Activated CD4-positive, alpha-beta memory T cell treated with anti-CD3 and anti-CD28 coated beads for 36 hours (primary cell): ENCODE measurements at regions of chr5 and their contacts with region 1.

Region 1: DNA sequence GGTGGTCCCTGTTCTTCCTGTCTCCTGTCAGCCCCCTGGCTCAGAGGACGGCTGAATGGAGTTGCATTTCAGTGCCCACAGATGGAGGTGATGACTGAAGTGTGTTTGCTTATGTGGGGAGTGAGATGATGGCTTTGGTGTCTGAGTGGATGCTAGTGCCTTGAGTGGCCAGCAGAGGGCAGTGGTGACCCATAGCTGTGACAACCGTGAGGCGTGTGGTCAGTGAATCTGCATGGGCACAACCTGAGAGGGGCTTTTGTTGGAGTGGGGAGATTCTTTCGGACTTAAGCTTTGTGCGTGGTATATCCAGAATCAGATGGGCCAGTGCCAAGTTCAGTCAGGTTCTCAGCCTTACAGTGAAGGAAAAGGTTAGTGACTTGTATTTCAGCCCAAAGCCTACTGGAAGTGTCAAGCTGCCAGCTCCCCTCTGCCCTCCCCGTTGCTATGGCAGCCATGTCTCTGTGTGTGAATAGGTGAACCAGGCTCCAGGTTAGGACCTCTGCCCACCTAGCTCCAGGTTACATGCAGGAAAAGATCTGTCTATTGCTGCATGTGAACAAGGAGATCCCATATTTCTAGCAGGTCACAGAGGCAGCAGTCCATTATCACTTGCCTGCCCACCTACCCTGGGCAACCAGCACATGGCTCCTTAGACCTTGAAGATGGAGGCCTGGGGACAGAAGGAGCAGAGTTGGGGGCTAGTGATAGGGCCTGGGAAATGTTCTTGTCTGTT is 14.7 kb upstream of the CXXC5 start:
- DNase-seq: peak; percentile 76
- H3K4me3 Mint-ChIP-seq: no peak overlapping the region
- H3K27ac Mint-ChIP-seq: peak overlapping the region; percentile 23
- H3K4me1 Mint-ChIP-seq: peaks cover 40% of the 10 kb centered on the region
- H3K27me3 Mint-ChIP-seq: no peaks in the 10 kb centered on the region

Region 2: GRCh38 chr5:139354186-139354585 is 279.3 kb before region 1 on chr5:
- CTCF ChIA-PET with region 1: no interaction called
- POLR2A ChIA-PET with region 1: no interaction called
- intact Hi-C with region 1: no loop called
- DNase-seq: no peak
- H3K4me3 Mint-ChIP-seq: no peak overlapping the region
- H3K27ac Mint-ChIP-seq: no peak overlapping the region
- H3K4me1 Mint-ChIP-seq: peaks cover 12% of the 10 kb centered on the region
- H3K27me3 Mint-ChIP-seq: no peaks in the 10 kb centered on the region

Region 3: GRCh38 chr5:139584137-139584536 is 49.3 kb before region 1 on chr5:
- CTCF ChIA-PET with region 1: no interaction called
- POLR2A ChIA-PET with region 1: no interaction called
- intact Hi-C with region 1: loop called (anchors 2 kb)
- DNase-seq: no peak
- H3K4me3 Mint-ChIP-seq: no peak overlapping the region
- H3K27ac Mint-ChIP-seq: peak overlapping the region; percentile 62
- H3K4me1 Mint-ChIP-seq: peaks cover 54% of the 10 kb centered on the region
- H3K27me3 Mint-ChIP-seq: no peaks in the 10 kb centered on the region

Region 4: DNA sequence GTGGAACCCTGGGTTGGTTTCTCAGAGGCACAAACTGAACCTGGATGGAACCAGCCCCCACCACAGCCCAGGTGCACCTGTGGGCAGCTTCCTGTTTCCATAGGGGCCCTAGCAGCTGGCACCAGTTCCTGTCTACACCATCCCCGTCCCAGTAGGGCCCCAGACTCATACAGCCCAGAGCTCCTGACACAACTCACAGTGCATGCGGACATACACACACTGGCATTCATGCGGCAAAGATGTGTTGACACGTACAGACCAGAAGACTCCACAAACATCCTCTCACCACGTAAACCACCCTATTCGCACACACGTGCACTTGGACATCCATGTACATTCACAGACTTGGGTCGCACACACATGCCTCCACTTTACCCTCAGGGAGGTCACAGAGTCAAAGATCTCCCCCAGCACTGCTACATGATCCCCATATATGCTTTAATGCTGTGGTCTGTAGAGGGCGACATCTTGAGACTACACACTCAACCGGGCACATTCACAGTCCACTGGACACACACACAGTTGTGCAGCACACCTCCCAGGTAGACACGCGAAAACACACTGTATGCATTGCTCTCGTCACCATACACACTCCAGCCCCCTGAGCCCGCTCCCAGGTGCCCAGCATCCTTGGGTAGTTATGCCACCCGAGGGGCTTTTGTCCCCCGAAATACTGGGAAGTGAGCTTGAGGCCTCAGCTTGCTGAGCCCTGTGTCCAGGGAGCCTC is 37.1 kb after region 1 on chr5:
- CTCF ChIA-PET with region 1: interaction called, 3 read pairs
- POLR2A ChIA-PET with region 1: interaction called, 3 read pairs
- intact Hi-C with region 1: loop called (anchors 1 kb)
- DNase-seq: peak; percentile 36
- H3K4me3 Mint-ChIP-seq: peak overlapping the region; percentile 1
- H3K27ac Mint-ChIP-seq: no peak overlapping the region
- H3K4me1 Mint-ChIP-seq: peaks cover 22% of the 10 kb centered on the region
- H3K27me3 Mint-ChIP-seq: no peaks in the 10 kb centered on the region

Region 5: DNA sequence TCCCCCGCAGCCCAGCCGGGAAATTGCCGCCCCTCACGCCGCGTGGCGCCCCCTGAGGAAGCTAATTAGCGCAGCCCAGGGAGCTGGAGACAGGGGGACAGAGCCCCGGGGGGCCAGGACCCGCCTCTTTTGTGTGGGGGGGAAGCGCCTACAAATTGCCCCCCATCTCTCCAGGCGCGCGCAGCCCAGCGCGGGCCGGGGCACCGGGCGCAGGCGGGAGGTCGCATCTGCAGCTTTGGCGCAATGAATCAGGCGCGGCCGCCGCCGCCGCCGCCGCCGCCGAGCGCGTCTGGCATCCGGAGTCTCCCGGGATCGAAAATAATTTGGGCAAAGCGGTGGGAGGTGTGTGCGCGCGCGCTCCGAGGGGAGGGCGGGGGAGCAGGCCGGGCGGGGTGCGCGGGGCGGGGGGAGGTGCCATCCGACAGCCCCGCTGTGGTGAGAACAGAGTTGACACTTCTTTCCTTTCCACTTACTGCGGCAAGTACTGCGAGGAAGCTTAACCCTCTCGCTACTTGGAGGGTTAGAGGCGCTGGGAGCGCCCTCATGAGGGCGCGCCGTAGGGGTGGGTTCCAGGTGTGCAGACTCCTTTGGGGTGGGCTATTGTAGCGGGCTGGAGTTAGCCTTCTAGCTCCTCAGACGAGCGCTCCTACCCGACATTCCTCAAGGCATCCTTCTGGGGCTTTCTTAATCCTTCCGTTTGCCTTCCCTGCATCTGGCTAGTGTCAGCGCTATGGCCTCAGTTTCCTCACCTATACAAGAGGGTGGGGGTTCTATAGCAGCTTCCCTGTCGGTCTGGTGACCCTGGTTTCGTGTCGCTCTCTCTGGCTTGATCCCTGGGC is 77.8 kb after region 1 on chr5:
- CTCF ChIA-PET with region 1: interaction called, 5 read pairs
- POLR2A ChIA-PET with region 1: no interaction called
- intact Hi-C with region 1: loop called (anchors 5 kb)
- DNase-seq: peak; percentile 74
- H3K4me3 Mint-ChIP-seq: peak overlapping the region; percentile 53
- H3K27ac Mint-ChIP-seq: no peak overlapping the region
- H3K4me1 Mint-ChIP-seq: peaks cover 12% of the 10 kb centered on the region
- H3K27me3 Mint-ChIP-seq: peaks cover 14% of the 10 kb centered on the region

Region 6: DNA sequence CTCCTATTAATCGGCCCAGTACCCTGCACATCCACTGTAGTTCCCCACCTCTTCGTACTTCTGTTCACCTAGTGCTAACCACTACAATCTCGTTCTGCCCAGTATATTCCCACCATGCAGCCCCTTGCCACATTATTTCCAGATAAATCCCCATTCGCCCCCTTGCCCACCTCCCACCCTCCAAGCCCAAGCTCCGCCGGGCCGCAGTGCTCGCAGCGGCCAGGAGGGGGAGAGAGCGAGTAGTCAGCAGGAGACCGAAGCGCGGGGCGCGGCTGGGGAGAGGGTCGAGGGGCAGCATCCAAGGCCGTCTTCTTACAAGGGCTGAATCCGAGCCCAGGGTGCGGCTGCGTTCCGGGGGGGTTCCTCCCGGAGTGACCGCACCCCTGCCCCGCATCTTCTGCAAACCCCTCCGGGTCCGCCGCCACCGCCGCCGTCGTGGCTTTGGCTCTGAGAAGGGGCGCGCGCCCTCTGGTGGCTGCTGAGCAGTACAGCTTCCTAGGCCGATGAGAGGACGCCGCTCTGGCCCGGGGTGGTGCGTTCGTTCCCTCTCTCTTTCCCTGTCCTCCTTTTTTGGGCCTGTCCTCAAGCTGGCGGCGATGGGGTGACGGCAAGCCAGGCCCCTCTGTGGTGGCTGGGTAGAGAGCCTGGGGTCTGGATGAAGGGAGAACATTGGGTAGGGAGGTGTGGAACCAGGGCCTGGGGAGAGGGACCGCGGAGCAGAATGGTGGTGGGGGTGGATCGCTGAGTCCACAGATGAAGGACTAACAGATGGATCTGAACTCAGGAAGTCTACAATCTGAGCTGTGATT is 132.2 kb after region 1 on chr5:
- CTCF ChIA-PET with region 1: interaction called, 145 read pairs
- POLR2A ChIA-PET with region 1: interaction called, 8 read pairs
- intact Hi-C with region 1: loop called (anchors 1 kb)
- DNase-seq: peak; percentile 86
- H3K4me3 Mint-ChIP-seq: peak overlapping the region; percentile 50
- H3K27ac Mint-ChIP-seq: no peak overlapping the region
- H3K4me1 Mint-ChIP-seq: peaks cover 15% of the 10 kb centered on the region
- H3K27me3 Mint-ChIP-seq: peaks cover 31% of the 10 kb centered on the region

Region 7: DNA sequence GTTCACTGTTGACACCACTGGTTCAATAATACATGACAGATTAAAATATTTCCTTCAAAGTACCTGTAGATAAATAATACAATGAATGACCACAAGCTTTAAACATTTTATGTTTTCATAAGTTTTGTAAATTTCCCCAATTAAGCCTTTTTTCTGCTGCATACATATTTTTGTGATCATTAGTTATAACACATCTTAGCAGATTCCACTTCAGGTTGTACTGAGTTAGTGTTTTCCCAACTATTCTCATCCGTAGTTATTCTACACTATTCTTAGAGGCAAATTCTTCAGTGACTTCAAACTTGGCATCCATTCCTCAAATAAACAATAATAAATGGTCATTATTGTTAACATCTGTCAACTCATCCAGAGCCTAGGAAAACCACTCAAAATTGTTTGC is 308.8 kb after region 1 on chr5:
- CTCF ChIA-PET with region 1: no interaction called
- POLR2A ChIA-PET with region 1: no interaction called
- intact Hi-C with region 1: no loop called
- DNase-seq: no peak
- H3K4me3 Mint-ChIP-seq: no peak overlapping the region
- H3K27ac Mint-ChIP-seq: no peak overlapping the region
- H3K4me1 Mint-ChIP-seq: no peaks in the 10 kb centered on the region
- H3K27me3 Mint-ChIP-seq: peaks cover 36% of the 10 kb centered on the region

Region 8: DNA sequence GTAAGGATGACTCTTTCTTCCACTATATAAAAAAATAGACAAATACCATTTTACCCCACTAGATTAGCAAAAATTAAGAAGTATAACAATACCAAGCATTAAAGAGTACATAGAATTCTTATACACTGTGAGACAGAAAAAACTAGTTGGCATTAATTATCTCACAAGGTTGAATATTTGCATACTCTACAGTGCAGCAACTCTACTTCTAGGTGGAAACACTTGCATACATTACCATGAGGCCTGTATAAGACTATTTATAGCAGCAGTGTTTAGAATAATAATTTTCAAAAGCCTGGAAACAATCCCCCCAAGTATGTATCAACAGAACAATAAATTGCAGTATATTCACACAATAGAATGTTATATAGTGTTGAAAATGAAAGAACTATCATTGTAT is 461.4 kb after region 1 on chr5:
- CTCF ChIA-PET with region 1: no interaction called
- POLR2A ChIA-PET with region 1: no interaction called
- intact Hi-C with region 1: no loop called
- DNase-seq: no peak
- H3K4me3 Mint-ChIP-seq: no peak overlapping the region
- H3K27ac Mint-ChIP-seq: no peak overlapping the region
- H3K4me1 Mint-ChIP-seq: no peaks in the 10 kb centered on the region
- H3K27me3 Mint-ChIP-seq: peaks cover 4% of the 10 kb centered on the region